Activated CD4-positive, alpha-beta T cell treated with anti-CD3 and anti-CD28 coated beads for 36 hours (primary cell): ENCODE measurements at regions of chr3 and their contacts with region 1.

Region 1: DNA sequence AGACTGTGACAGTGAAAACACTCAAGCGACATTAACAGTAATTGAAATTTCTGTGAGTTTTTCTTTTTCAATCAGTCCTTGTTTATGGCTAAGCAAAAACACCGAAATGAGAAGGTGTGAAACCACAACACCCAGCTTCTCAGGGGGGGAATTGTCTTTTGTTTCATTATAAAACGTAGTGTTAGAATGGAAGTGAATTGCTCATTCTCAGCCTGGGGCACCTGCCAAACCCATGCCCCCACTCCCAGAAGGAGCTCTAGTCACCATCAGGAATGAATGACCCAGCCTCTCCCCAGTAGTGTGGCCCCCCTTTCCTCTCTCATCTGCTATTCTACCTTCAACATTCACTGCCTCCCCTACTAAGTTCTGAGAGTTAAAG is 185.8 kb upstream of the CFAP20DC start:
- DNase-seq: peak; percentile 65
- ATAC-seq: peak; percentile 91
- H3K4me3 Mint-ChIP-seq: no peak overlapping the region
- H3K27ac Mint-ChIP-seq: no peak overlapping the region
- H3K4me1 Mint-ChIP-seq: peaks cover 14% of the 10 kb centered on the region
- H3K27me3 Mint-ChIP-seq: peaks cover 7% of the 10 kb centered on the region

Region 2: DNA sequence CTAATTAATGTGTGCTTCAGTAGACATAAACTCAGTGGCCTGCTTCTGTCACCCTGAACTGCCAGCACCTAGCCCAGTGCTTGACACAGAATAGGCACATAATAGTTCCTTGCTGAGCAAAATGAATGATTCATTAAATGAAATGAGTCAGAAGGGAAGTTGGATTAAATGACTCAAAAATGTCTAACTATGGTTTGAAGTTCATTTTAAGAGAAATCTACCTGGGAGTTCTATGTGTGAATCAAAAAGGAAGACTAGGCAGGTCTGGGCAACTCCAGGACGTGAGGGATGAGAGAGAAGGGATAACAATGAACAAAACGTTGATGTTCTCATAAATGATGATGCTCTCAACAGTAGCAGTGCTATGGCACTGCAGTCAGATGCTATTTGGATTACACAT is 360.8 kb before region 1 on chr3:
- CTCF ChIA-PET with region 1: no interaction called
- POLR2A ChIA-PET with region 1: no interaction called
- intact Hi-C with region 1: loop called in 1 of 2 experiments (anchors 1 kb)
- DNase-seq: peak; percentile 56
- ATAC-seq: peak; percentile 96
- H3K4me3 Mint-ChIP-seq: no peak overlapping the region
- H3K27ac Mint-ChIP-seq: peak overlapping the region; percentile 12
- H3K4me1 Mint-ChIP-seq: peaks cover 19% of the 10 kb centered on the region
- H3K27me3 Mint-ChIP-seq: peaks cover 14% of the 10 kb centered on the region

Region 3: DNA sequence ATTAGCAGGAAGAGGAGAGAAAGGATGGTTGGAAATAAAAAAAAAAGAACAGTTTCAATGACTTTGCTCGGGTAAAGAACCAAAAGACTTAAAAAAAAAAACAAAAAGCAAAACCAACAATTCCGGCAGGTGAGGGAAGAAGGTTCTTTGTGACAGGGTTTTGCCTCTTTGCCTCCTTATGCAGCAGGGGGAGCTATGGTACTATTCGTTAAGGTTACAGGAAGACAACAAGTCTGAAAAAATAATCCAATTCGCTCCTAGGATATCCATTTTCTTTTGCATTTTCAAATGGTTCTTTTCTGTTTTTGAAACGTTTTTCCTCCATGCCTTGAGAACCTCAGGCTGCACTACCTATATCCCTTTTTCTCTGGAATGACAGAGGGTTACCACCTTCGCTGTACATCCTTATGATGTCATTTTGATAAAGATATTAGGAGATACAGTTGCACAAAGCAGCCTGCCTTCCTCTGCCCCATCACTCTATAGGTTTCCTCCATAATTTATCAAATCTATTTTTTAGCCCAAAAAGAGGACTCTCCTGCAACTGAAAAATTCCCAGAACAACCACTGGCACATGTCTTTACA is 240.8 kb before region 1 on chr3:
- CTCF ChIA-PET with region 1: no interaction called
- POLR2A ChIA-PET with region 1: no interaction called
- intact Hi-C with region 1: no loop called
- DNase-seq: peak; percentile 47
- ATAC-seq: no peak
- H3K4me3 Mint-ChIP-seq: no peak overlapping the region
- H3K27ac Mint-ChIP-seq: no peak overlapping the region
- H3K4me1 Mint-ChIP-seq: peaks cover 7% of the 10 kb centered on the region
- H3K27me3 Mint-ChIP-seq: peaks cover 5% of the 10 kb centered on the region

Region 4: DNA sequence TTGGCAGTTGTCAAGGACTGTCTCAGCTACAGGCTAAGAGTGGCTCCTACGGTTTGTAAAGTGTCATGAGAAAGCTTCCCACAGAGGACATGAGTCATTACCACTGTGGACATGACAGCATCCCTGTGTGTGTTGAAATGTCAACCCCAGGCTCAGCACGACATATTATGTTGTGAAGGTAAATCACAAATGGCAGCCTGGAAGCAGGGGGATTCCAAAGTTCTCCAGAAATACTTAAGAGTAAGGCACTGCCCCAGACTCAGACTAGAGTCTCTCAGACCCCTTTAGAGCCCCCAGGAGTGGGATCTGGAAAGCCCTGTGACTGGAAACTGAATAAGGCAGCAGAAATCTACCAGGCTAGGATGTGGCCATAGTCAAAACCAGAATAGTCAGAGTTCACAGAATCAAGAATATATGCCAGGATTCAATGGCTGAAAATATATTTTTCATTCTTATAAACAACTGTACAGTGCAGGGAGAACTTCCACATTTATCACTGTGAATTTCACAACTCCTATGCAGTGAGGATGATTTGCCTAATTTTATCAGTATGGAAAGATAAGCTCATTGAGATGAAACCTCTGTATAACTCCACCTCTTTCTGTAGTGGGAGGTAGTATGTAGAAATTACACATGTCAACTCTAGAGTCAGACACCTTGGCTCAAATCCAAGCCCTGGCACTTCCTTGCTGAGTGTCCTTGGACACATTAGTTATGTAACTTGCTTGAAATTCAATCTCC is 51.3 kb after region 1 on chr3:
- CTCF ChIA-PET with region 1: no interaction called
- POLR2A ChIA-PET with region 1: no interaction called
- intact Hi-C with region 1: loop called (anchors 1 kb)
- DNase-seq: peak; percentile 63
- ATAC-seq: peak; percentile 96
- H3K4me3 Mint-ChIP-seq: no peak overlapping the region
- H3K27ac Mint-ChIP-seq: peak overlapping the region; percentile 78
- H3K4me1 Mint-ChIP-seq: peaks cover 29% of the 10 kb centered on the region
- H3K27me3 Mint-ChIP-seq: peaks cover 3% of the 10 kb centered on the region

Region 5: DNA sequence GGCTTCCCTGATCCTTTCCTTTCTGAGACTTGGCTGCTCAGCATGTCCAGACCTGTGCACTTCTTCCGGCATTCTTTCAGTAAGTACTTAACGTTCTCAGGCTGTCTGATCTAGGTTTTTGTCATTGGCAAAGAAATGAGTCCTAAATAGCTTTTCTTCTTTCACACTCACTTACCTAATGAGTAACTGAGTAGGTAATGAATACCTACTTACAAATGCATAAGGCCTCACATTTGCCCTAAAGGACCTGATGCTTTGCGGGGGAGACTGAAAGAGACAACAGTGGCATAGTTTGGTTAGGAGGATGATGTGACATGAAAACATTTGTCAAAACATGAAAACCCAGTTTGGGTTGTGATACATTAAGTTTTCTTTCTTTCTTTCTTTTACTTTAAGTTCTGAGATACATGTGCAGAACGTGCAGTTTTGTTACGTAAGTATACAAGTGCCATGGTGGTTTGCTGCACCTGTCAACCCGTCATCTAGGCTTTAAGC is 330.9 kb after region 1 on chr3:
- CTCF ChIA-PET with region 1: no interaction called
- POLR2A ChIA-PET with region 1: no interaction called
- intact Hi-C with region 1: loop called (anchors 2 to 10 kb)
- DNase-seq: peak; percentile 46
- ATAC-seq: peak; percentile 98
- H3K4me3 Mint-ChIP-seq: no peak overlapping the region
- H3K27ac Mint-ChIP-seq: peak overlapping the region; percentile 45
- H3K4me1 Mint-ChIP-seq: peaks cover 17% of the 10 kb centered on the region
- H3K27me3 Mint-ChIP-seq: peaks cover 4% of the 10 kb centered on the region